ENCODE measurements at regions of chr5 and their contacts with region 1.

Region 1: GRCh38 chr5:143290125-143290524 is 113.4 kb downstream of the NR3C1 start:
- DNase-seq: no peak

Region 2: DNA sequence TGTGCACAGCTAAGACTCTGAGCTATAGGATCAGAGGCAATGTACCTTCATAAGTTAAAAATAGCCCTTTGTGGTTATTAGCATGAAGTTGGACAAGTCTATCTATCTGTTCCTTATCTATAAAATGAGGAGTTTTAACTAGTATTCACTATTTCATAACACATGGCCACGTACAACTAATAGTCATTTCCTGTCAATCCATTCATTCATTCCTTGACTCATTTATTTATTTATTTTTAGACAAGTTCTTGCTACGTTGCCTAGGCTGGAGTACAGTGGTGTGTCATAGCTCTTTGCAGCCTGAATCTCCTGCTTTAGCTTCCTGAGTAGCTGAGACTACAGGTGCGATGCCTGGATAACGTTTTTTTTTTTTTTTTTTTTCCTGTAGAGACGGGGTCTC is 21.3 kb after region 1 on chr5:
- intact Hi-C with region 1: loop called in 1 of 2 experiments (anchors 1 kb)
- DNase-seq: no peak

Region 3: GRCh38 chr5:143605403-143606005 is 315.4 kb after region 1 on chr5:
- intact Hi-C with region 1: no loop called
- DNase-seq: no peak